HCT116 (cell line): ENCODE measurements at regions of chr18 and their contacts with region 1.

Region 1: DNA sequence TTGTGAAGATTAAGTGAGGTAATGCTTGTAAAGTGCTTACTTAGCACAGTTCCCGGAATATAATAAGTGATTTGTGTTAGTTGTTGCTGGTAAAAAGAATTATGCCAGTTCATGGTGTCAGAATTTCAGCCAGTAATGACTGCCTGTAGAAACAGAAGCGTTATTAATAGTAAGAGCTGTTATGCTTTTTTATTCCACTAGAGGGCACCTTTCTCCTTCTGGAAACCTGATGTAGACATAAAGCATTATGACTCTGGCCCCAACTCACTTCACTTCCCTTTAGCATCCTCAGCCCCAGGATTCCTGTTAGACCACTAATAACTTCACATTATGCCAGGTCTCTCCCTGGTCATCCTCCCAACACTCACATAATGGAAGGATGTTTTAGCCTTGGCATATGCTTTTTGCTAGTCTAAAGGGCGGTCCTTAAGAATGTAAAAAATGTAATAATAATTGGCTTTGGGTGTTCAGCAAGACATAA is 34.9 kb downstream of the C18orf54 start:
- DNase-seq: peak; percentile 68
- ATAC-seq: peak; percentile 58
- H3K4me3 ChIP-seq: no peak overlapping the region
- H3K27ac ChIP-seq: no peak overlapping the region
- H3K4me1 ChIP-seq: peaks cover 19 to 31% of the 10 kb centered on the region in 2 experiments
- H3K27me3 ChIP-seq: no peaks in the 10 kb centered on the region
- CTCF ChIP-seq: peak; percentile 52 to 79 (median 62); a peak in 5 of 6 replicates
- POLR2A ChIP-seq: no peak
- RAD21 ChIP-seq: peak; percentile 69

Region 2: DNA sequence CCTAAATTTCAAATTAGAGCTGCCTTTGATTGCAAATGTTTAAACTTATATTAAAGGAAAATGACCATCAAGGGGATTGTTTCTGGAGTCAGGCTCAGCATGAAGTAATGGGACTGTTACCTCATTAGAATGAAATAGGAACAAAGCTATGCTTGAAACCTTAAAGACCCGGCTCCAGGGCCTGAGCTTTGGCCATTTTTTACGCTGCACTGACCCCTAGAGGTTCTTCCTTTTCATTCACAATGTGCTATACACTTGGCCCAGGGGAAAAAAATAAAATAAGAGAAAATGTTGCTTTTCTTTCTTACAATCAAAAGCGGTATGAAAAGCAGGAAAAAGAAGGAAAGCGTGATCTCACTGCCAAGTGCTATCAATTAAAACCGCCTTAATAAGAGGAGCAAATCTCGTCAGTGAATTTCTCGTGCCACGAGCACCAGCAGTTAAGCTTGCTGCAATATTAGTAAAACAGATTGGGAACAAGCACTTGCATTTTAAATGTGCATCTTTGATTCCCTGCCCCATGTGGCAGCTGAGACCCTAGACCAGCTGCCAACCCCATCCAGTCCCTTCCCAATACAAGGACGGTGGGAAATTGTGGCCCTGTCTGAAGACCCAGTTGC is 264.7 kb before region 1 on chr18:
- CTCF ChIA-PET with region 1: no interaction called
- POLR2A ChIA-PET with region 1: no interaction called
- RAD21 ChIA-PET with region 1: no interaction called
- intact Hi-C with region 1: no loop called
- DNase-seq: peak; percentile 35
- ATAC-seq: peak; percentile 94
- H3K4me3 ChIP-seq: no peak overlapping the region
- H3K27ac ChIP-seq: no peak overlapping the region
- H3K4me1 ChIP-seq: no peaks in the 10 kb centered on the region
- H3K27me3 ChIP-seq: no peaks in the 10 kb centered on the region
- CTCF ChIP-seq: peak; percentile 35 to 72 (median 61); a peak in 5 of 6 replicates
- POLR2A ChIP-seq: no peak
- RAD21 ChIP-seq: peak; percentile 68

Region 3: DNA sequence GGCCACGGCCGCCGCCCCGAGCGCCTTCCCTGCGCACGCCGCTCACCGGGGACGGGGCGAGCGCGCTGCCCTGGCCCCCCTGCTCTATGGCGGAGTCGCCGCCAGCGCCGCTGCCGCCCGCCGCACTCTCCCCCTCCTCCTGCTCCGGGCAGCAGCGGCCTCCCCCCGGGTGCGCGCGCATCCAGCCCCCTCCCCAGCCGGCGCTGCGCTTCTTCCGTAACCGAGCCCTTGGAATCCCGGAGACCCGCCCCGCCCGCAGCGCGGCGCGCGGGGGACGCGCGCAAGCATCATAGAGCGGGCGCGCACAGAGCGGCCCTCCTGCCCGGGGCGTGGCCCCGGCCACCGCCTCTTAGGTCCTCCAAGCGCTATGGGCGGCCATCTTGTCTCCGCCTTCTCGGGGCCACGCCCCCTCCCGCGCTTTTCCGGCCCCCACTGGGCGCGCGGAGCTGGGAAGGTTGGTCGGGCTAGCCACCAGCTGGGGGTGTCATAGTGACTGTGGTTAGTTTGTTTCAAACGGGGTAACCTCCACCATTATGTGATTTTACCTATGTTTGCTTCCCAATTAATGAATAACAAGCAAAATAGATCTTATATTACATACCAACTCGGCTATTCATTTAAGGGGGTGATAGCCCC is 168.1 kb before region 1 on chr18 and contains the start of gene MBD2:
- CTCF ChIA-PET with region 1: no interaction called
- POLR2A ChIA-PET with region 1: no interaction called
- RAD21 ChIA-PET with region 1: no interaction called
- intact Hi-C with region 1: loop called (anchors 10 kb)
- DNase-seq: peak; percentile 89
- ATAC-seq: peak; percentile 96
- H3K4me3 ChIP-seq: peak within 1 kb of the TSS; percentile 67 to 81
- H3K27ac ChIP-seq: peak within 1 kb of the TSS; percentile 71
- H3K4me1 ChIP-seq: peaks cover 10 to 17% of the 10 kb centered on the region in 2 experiments
- H3K27me3 ChIP-seq: no peaks in the 10 kb centered on the region
- CTCF ChIP-seq: peak; percentile 8 to 28 (median 16); a peak in 3 of 6 replicates
- POLR2A ChIP-seq: peak; percentile 57
- RAD21 ChIP-seq: peak; percentile 36
- total RNA-seq, gene MBD2: 79.1 TPM

Region 4: DNA sequence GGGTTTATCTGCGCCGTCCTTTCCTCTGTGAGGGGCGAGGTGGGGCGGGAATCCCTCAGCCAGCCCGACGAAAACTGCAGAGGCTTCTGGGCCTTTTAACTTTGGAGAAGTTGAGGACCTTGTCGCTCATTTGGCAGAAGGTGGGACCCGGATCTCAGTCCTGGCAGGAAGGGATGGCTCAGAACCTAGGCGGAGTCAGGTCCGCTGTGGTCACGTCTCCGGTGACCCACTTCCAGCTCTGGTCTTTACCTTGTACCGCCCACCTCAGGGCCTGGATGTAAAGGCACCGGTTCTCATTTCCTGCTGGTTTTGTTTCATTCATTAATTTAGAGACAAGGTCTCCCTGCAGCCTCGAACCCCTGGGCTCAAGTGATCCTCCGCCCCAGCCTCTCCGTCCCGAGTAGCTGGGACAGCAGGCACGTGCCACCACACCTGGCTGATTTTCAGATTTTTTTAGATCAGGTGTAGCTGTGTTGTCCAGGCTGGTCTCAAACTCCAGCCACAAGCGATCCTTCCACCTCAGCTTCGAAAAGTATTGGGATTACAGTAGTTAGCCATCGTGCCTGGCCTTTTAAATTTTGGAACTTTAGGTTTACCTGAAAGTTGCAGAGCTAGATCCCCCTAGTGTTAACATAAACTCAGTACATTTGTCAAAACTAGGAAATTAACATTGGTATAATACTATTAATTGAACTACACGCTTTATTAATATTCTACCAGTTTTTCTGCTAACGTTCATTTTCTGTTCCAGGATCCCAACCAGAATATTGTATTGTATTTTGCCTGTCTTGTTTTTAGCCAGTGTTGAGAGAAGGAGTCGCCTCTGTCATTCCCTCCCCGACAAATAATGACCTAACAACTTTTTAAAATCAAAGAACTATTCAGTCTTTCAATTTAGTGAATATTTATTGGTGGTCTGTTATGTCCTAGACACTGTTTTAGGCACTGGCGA is 122.4 kb before region 1 on chr18:
- CTCF ChIA-PET with region 1: interaction called, 7 read pairs
- POLR2A ChIA-PET with region 1: interaction called, 3 read pairs
- RAD21 ChIA-PET with region 1: no interaction called
- intact Hi-C with region 1: loop called (anchors 5 kb)
- DNase-seq: peak; percentile 68
- ATAC-seq: peak; percentile 79
- H3K4me3 ChIP-seq: peak overlapping the region; percentile 65 to 67
- H3K27ac ChIP-seq: peak overlapping the region; percentile 95
- H3K4me1 ChIP-seq: peaks cover 13 to 24% of the 10 kb centered on the region in 2 experiments
- H3K27me3 ChIP-seq: no peaks in the 10 kb centered on the region
- CTCF ChIP-seq: peak; percentile 31 to 58 (median 42); a peak in 4 of 6 replicates
- POLR2A ChIP-seq: no peak
- RAD21 ChIP-seq: peak; percentile 59

Region 5: DNA sequence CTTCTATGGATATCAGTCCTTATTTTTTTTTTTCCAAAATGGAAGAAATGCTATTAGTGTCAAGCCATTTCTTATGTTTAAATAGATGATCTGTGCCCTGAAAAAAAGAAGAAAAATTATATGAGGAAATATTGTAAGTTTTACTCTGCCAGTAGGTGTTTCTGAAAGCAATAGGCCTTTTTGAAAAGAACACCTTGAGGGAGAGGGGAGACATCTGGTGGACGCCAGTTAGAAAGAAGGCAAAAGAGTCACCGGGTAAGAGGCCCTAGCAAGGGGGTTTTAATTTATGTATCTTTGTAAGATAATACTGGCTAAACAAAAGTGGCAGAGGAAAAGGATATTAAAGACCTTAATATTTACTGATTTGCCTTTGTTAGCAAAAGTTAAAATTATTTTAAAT is 254.6 kb after region 1 on chr18:
- CTCF ChIA-PET with region 1: interaction called, 3 read pairs
- POLR2A ChIA-PET with region 1: no interaction called
- RAD21 ChIA-PET with region 1: no interaction called
- intact Hi-C with region 1: loop called (anchors 1 kb)
- DNase-seq: peak; percentile 34
- ATAC-seq: peak; percentile 80
- H3K4me3 ChIP-seq: no peak overlapping the region
- H3K27ac ChIP-seq: no peak overlapping the region
- H3K4me1 ChIP-seq: no peaks in the 10 kb centered on the region
- H3K27me3 ChIP-seq: no peaks in the 10 kb centered on the region
- CTCF ChIP-seq: peak; percentile 54 to 67 (median 66)
- POLR2A ChIP-seq: no peak
- RAD21 ChIP-seq: peak; percentile 73

Region 6: DNA sequence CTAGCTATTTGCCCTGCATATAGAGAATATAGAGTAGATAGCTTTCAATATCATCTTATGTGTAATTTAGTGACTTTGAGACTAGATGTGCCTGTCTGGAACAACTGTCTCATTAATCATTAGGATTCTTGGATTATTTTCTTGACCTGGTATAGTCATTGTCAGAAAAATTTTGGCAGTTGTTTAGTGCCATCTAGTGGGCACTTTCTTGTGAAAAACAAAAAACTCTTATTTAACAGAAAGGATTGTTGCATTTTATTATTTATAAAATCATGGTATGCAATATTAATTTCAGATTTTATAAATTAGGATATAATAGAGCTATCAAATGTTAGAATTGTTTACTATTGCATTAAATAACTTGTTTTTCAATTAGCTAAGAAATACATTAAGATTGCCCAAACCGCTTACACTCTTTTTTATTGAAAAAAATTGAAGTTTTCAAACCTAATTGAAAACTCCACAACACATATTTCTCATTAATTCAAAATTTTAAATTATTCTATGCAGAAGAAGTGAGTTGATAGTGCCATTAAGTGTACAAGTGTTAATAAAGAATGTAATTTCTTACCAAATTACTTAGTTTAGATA is 278.8 kb after region 1 on chr18:
- CTCF ChIA-PET with region 1: interaction called, 6 read pairs
- POLR2A ChIA-PET with region 1: no interaction called
- RAD21 ChIA-PET with region 1: interaction called in 1 of 2 experiments, 3 read pairs
- intact Hi-C with region 1: loop called (anchors 5 kb)
- DNase-seq: peak; percentile 24
- ATAC-seq: no peak
- H3K4me3 ChIP-seq: no peak overlapping the region
- H3K27ac ChIP-seq: no peak overlapping the region
- H3K4me1 ChIP-seq: no peaks in the 10 kb centered on the region
- H3K27me3 ChIP-seq: no peaks in the 10 kb centered on the region
- CTCF ChIP-seq: peak; percentile 41 to 58 (median 56); a peak in 5 of 6 replicates
- POLR2A ChIP-seq: no peak
- RAD21 ChIP-seq: peak; percentile 75

Region 7: GRCh38 chr18:54983041-54983686 is 590.6 kb after region 1 on chr18:
- CTCF ChIA-PET with region 1: no interaction called
- POLR2A ChIA-PET with region 1: no interaction called
- RAD21 ChIA-PET with region 1: no interaction called
- intact Hi-C with region 1: loop called (anchors 5 kb)
- DNase-seq: peak; percentile 47
- ATAC-seq: peak; percentile 96
- H3K4me3 ChIP-seq: no peak overlapping the region
- H3K27ac ChIP-seq: no peak overlapping the region
- H3K4me1 ChIP-seq: peaks cover 0 to 4% of the 10 kb centered on the region in 2 experiments; a peak in 1 of 4 replicates
- H3K27me3 ChIP-seq: no peaks in the 10 kb centered on the region
- CTCF ChIP-seq: peak; percentile 46 to 74 (median 67); a peak in 5 of 6 replicates
- POLR2A ChIP-seq: no peak
- RAD21 ChIP-seq: peak; percentile 86